CD8-positive, alpha-beta T cell (primary cell): ENCODE measurements at regions of chr22 and their contacts with region 1.

Region 1: DNA sequence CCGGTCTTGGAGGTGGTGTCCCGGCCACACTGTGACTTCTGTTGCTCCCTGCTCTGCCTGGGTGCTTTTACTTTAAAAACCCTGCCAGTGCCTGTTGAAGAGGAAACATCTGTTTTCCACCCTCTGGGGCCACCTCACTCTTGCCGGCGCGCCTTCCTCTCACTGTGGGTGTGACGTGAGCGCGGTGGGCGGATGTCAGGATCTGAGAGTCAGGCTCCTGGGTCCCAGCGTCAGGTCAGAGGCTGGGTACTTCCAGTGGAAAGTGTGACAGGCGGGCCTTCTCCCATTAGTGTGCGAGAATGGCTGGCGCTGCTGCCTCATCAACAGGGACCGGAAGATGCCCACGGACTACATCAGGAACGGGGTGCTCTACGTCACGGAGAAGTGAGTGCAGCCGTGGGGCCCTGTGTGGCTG is 54.2 kb downstream of the GRAMD4 start:
- DNase-seq: peak; percentile 54 to 95 (median 85)
- ATAC-seq: peak; percentile 87
- H3K4me3 ChIP-seq: peak overlapping the region; percentile 40 to 57
- H3K4me3 Mint-ChIP-seq: peak overlapping the region; percentile 93
- H3K27ac ChIP-seq: peak overlapping the region; percentile 44 to 70
- H3K27ac Mint-ChIP-seq: peak overlapping the region; percentile 96
- H3K4me1 ChIP-seq: peaks cover 32% of the 10 kb centered on the region
- H3K4me1 Mint-ChIP-seq: peaks cover 22% of the 10 kb centered on the region
- H3K27me3 ChIP-seq: no peaks in the 10 kb centered on the region
- H3K27me3 Mint-ChIP-seq: no peaks in the 10 kb centered on the region
- CTCF ChIP-seq: no peak

Region 2: DNA sequence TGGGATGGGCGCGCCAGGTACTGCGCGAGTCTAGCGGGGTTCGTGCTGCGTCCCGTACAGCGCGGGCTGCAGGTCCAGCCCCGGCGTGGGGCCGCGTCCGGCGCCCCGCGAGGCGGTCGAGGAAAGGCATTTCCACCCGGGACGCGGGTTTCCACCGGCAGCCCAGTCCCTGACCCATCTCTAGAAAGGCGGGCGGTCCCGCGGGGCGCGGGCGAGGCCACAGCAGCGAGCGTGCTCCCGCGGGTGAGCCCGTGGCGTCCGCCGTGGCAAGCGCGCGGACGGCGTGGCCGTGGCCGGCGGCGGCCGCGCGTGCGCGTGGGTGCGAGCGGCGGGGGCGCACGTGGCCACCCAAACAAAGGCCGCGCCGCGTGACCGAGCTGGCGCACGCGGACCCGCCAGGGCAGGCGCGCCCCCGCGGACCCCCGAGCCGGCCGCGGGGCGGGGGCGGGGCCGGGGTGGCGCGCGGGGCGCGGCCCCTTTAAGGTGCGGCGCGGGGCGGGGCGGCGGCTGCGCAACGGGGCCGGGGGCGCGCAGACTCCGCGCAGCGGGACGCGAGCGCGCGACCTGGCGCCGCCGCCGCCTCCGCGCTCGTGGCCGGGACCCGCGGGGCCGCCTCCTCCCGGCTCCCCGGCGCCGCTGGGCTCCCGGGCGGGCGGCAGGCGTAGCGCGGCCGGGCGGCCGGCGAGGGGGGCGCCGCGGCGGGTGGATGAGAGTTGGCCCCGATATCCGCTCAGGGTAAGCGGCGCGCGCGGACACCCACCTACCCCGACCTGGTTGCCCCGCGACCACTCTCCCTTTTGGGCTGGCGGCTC is 97.6 kb before region 1 on chr22:
- CTCF ChIA-PET with region 1: no interaction called
- POLR2A ChIA-PET with region 1: no interaction called
- intact Hi-C with region 1: loop called (anchors 2 kb)
- DNase-seq: peak; percentile 24 to 88 (median 57)
- ATAC-seq: peak; percentile 79
- H3K4me3 ChIP-seq: peak overlapping the region; percentile 40 to 58
- H3K4me3 Mint-ChIP-seq: peak overlapping the region; percentile 85
- H3K27ac ChIP-seq: no peak overlapping the region
- H3K27ac Mint-ChIP-seq: peak overlapping the region; percentile 74
- H3K4me1 ChIP-seq: peaks cover 21% of the 10 kb centered on the region
- H3K4me1 Mint-ChIP-seq: peaks cover 39% of the 10 kb centered on the region
- H3K27me3 ChIP-seq: no peaks in the 10 kb centered on the region
- H3K27me3 Mint-ChIP-seq: no peaks in the 10 kb centered on the region
- CTCF ChIP-seq: no peak

Region 3: DNA sequence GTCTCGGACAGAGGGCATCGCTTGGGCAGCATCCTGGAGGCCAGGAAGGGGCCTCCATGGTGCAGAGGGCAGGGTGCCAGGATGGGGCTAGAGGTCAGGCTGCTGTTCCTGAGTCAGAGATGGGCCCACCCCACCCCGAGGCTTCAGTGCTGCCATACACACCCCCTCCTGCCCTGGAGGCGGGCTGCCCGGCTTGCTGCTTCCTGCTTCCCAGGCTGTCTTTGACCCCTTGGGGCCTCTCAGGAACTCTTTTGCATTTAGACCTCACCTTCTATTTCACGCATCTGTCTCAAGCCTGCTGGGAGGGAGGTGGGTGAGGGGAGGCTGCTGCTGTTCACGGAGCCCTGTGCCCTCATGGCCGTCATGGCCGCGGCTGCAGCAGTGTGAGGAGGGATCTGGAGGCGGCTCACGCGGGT is 60.8 kb before region 1 on chr22:
- CTCF ChIA-PET with region 1: no interaction called
- POLR2A ChIA-PET with region 1: no interaction called
- intact Hi-C with region 1: loop called (anchors 1 to 2 kb)
- DNase-seq: peak in 2 of 9 experiments; percentile 16 to 31
- ATAC-seq: no peak
- H3K4me3 ChIP-seq: peak overlapping the region; percentile 49 to 52
- H3K4me3 Mint-ChIP-seq: peak overlapping the region; percentile 90
- H3K27ac ChIP-seq: peak overlapping the region; percentile 20 to 51
- H3K27ac Mint-ChIP-seq: peak overlapping the region; percentile 90
- H3K4me1 ChIP-seq: peaks cover 25% of the 10 kb centered on the region
- H3K4me1 Mint-ChIP-seq: peaks cover 28% of the 10 kb centered on the region
- H3K27me3 ChIP-seq: no peaks in the 10 kb centered on the region
- H3K27me3 Mint-ChIP-seq: no peaks in the 10 kb centered on the region
- CTCF ChIP-seq: no peak

Region 4: GRCh38 chr22:46791201-46791731 is 116.9 kb after region 1 on chr22:
- CTCF ChIA-PET with region 1: no interaction called
- POLR2A ChIA-PET with region 1: no interaction called
- intact Hi-C with region 1: loop called in 1 of 2 experiments (anchors 1 kb)
- DNase-seq: peak; percentile 69 to 96 (median 85)
- ATAC-seq: peak; percentile 90
- H3K4me3 ChIP-seq: peak overlapping the region; percentile 29 to 47
- H3K4me3 Mint-ChIP-seq: peak overlapping the region; percentile 76
- H3K27ac ChIP-seq: peak overlapping the region; percentile 95 to 99
- H3K27ac Mint-ChIP-seq: peak overlapping the region; percentile 100
- H3K4me1 ChIP-seq: peaks cover 36% of the 10 kb centered on the region
- H3K4me1 Mint-ChIP-seq: peaks cover 50% of the 10 kb centered on the region
- H3K27me3 ChIP-seq: no peaks in the 10 kb centered on the region
- H3K27me3 Mint-ChIP-seq: no peaks in the 10 kb centered on the region
- CTCF ChIP-seq: no peak